Ascending aorta (tissue), 2 donors: ENCODE measurements at regions of chr14 and their contacts with region 1.

Region 1: GRCh38 chr14:31420319-31421111 is at the start of gene HEATR5A:
- DNase-seq: peak; percentile 71 to 96
- H3K4me3 ChIP-seq: peak within 1 kb of the TSS; percentile 91 to 97
- H3K27ac ChIP-seq: peak within 1 kb of the TSS; percentile 87 to 88
- H3K4me1 ChIP-seq: peaks cover 0 to 12% of the 10 kb centered on the region in 2 donors
- H3K27me3 ChIP-seq: no peaks in the 10 kb centered on the region
- CTCF ChIP-seq: peak in 2 of 3 experiments; percentile 23 to 38
- total RNA-seq, gene HEATR5A: 11.6 TPM

Region 2: DNA sequence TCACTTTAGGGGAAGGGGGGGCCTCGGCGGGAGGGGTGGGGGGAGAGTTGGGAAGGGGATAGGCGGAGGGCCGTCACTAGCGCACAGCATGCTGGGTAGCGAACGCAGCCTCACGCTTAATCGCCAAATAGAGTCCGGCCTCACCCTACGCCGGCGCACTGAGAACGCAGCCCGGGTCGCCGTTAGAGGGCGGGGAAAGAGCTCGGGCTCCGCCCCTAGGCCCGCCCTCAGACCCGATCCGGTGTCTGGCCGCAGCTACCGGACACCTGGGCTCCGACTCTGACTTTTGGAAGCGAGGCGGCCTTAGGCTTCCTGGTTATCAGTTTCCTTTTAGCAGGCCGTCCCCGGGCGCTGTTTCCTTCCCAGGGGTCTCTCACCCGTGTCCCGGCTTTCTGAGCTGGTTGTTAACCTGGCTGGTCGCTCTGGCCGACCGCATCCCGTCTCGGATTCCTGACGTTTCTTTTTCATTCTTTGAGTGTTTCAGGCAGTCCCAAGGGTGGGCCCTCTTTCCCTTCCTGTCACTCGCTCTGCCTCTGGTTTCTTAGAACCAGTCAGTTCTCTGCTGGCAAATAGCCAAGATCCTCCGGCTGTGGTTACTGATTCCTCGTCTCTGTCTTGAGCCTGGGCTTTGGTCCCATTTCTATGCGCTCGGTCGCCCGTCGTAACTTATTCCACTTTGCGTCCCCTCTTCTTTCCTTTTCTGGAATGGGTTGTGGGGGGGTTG is 394.0 kb before region 1 on chr14:
- intact Hi-C with region 1: no loop called
- DNase-seq: peak; percentile 89 to 98
- H3K4me3 ChIP-seq: peak overlapping the region; percentile 98 to 100
- H3K27ac ChIP-seq: peak overlapping the region; percentile 100
- H3K4me1 ChIP-seq: peaks cover 0 to 14% of the 10 kb centered on the region in 2 donors
- H3K27me3 ChIP-seq: no peaks in the 10 kb centered on the region
- CTCF ChIP-seq: no peak

Region 3: DNA sequence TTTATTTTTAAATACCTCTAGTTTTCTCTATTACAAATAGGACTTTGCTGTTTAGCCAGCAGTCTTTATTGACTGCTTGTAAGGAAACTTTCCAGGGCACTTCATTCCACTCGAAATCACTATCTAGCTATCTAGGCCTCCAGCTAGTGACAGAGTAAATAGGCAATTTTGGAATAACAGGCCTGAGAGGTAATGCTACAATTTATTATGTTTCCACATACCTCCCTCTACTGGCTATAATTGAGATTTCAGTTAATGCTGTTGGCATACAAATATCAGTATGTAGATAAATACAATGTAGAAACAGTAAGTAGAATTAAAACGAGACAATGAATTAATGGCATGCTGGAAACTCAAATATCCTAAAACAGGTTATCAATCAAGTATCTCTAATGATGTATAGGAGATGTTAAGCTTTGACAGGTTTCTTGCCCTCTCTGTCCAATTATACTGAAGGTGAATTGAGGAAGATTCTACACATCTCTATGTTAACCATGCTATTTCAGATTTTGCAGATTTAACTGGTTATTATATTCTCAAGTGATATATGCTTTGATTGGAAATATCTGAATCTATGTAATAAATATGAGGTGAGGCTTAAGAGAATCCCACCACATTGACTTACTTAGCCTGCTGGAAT is 29.6 kb after region 1 on chr14:
- intact Hi-C with region 1: loop called (anchors 2 kb)
- DNase-seq: no peak
- H3K4me3 ChIP-seq: no peak overlapping the region
- H3K27ac ChIP-seq: peak overlapping the region in 1 of 2 donors; percentile 16
- H3K4me1 ChIP-seq: peaks cover 0 to 1% of the 10 kb centered on the region in 2 donors
- H3K27me3 ChIP-seq: no peaks in the 10 kb centered on the region
- CTCF ChIP-seq: peak; percentile 24 to 62 (median 39)

Region 4: DNA sequence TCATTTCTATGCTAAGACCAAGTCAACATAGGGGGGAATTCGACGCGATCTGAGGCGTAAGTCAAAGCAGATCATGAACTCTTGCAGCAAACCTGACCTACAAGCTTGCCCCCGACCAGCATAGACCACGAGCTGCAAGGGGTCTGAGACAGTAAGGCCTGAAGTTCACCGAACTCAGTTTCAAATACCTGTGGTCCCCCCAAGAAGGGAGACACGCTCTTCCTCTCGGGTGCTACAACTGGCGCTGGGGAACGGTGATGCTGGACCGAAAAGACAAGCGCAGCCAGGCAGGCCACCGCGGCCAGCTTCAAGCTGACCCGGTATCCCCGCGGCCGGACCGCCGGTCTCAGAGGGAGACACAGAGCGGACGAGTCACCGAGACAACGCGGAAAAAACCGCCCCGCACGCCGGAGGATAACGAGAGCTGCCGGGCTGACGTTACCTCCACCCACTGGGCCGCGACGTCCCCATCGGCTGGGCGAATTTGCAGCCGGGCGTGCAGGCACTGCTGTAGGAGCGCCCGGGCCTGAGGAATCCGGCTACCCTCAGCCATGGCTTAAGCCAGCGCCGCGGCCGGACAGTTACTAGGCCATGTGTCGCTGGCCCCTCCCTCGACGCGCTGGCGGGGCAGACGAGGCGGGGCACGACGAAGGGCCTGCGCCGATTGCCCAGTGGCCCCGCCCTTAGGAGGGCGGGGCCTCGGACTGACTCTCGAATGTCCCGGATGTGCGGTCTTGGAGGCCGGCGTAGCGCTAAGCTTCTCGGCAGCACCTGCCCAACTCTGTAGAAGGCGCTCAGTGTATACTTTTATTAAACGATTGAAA is 36.5 kb after region 1 on chr14 and contains the start of gene DTD2:
- intact Hi-C with region 1: loop called (anchors 1 kb)
- DNase-seq: peak; percentile 75 to 97
- H3K4me3 ChIP-seq: peak within 1 kb of the TSS; percentile 72 to 74
- H3K27ac ChIP-seq: peak within 1 kb of the TSS; percentile 87 to 90
- H3K4me1 ChIP-seq: peaks cover 4 to 6% of the 10 kb centered on the region in 2 donors
- H3K27me3 ChIP-seq: no peaks in the 10 kb centered on the region
- CTCF ChIP-seq: no peak
- total RNA-seq, gene DTD2: 120 TPM